ENCODE measurements at regions of chr2 and their contacts with region 1.

Region 1: GRCh38 chr2:176554101-176555048 is 285.1 kb downstream of the MTX2 start:
- DNase-seq: peak; percentile 8
- ATAC-seq: peak; percentile 79
- H3K4me3 ChIP-seq: peak overlapping the region; percentile 32; the same call in 1 of the 2 replicates
- H3K27ac ChIP-seq: no peak overlapping the region
- H3K4me1 ChIP-seq: no peaks in the 10 kb centered on the region
- H3K27me3 ChIP-seq: 0 out of 4 replicates have a peak, but pooled peaks cover 0 to 3% of the 10 kb centered on the region in 2 experiments
- CTCF ChIP-seq: peak; percentile 58 to 78 (median 70)
- EP300 ChIP-seq: no peak
- POLR2A ChIP-seq: no peak
- RAD21 ChIP-seq: peak; percentile 82

Region 2: GRCh38 chr2:175698061-175698460 is 856.3 kb before region 1 on chr2:
- CTCF ChIA-PET with region 1: no interaction called
- POLR2A ChIA-PET with region 1: no interaction called
- RAD21 ChIA-PET with region 1: no interaction called
- SMC1A ChIA-PET with region 1: no interaction called
- in situ Hi-C with region 1: no loop called
- intact Hi-C with region 1: no loop called
- DNase-seq: no peak
- ATAC-seq: no peak
- H3K4me3 ChIP-seq: no peak overlapping the region
- H3K27ac ChIP-seq: no peak overlapping the region
- H3K4me1 ChIP-seq: no peaks in the 10 kb centered on the region
- H3K27me3 ChIP-seq: no peaks in the 10 kb centered on the region
- CTCF ChIP-seq: no peak
- EP300 ChIP-seq: no peak
- POLR2A ChIP-seq: no peak
- RAD21 ChIP-seq: no peak

Region 3: DNA sequence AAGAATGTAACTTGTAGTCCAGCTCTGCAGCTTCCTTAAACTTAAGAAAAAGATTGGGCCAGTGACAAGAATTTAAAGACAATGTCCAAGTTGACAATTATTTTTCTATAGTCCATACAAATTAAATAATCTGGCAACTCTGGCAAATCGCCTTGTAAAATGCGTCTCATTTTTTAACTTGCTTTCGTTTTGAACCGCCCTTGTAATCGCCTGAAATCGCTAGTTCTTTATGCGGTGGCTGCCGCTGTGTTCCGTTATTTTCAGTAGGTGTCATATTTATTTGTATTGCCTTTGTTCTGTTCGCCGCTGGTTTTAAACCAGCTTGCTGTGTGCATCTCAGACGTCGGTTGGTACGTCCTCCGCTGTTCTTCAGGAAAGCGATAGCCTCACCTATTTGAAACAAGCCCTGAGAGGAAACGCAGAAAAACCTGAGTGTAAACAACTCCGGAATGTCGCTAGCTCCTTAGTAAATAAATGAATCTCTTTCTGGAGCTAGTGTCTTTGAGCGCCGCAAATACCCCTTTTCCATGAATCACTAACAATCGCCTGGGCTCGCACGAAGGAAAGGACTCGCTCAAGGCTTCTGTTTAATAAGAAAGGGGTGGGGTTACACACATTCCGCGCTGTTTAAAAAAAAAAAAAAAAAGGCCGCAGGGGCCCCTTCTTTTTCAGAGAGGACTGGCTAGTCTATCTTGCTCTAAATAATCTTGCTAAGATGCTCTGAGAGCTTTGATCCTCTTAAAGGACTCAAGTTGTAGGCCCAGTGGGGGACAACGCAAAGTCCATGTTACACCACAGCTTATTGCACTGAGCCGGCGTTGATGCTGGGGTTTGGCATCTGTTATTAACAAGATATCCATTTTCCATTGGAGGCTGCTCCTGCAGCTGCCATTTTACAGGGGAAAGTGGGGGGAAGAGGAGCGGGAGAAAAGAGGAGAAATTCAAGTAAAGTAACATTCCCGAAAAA is 421.9 kb before region 1 on chr2:
- CTCF ChIA-PET with region 1: interaction called, 36 read pairs
- POLR2A ChIA-PET with region 1: no interaction called
- RAD21 ChIA-PET with region 1: interaction called, 16 read pairs
- SMC1A ChIA-PET with region 1: interaction called, 58 read pairs
- in situ Hi-C with region 1: no loop called
- intact Hi-C with region 1: no loop called
- DNase-seq: no peak
- ATAC-seq: no peak
- H3K4me3 ChIP-seq: peak overlapping the region; percentile 6; the same call in 1 of the 2 replicates
- H3K27ac ChIP-seq: no peak overlapping the region
- H3K4me1 ChIP-seq: no peaks in the 10 kb centered on the region
- H3K27me3 ChIP-seq: peaks cover 10 to 32% of the 10 kb centered on the region in 2 experiments
- CTCF ChIP-seq: no peak
- EP300 ChIP-seq: no peak
- POLR2A ChIP-seq: no peak
- RAD21 ChIP-seq: no peak

Region 4: DNA sequence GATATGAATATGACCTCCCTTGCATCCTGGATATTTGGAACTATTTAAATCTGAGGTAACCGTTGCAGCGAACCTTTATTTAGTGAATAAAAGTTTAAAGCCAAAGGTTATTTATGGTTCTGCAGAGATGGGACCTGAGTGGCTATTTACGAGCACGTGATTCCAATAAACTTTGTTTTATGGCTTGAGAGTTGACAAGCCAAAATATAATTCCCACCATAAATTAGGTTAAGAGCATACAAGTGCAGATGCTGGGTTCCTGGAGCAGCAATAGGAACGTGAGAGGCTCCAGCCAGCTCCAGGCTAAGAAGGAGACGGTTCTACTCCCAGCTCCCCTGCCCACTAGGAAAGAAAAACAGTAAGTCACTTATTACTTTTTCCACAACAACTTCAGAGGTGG is 408.3 kb before region 1 on chr2:
- CTCF ChIA-PET with region 1: interaction called, 120 read pairs
- POLR2A ChIA-PET with region 1: no interaction called
- RAD21 ChIA-PET with region 1: interaction called, 103 read pairs
- SMC1A ChIA-PET with region 1: interaction called, 58 read pairs
- in situ Hi-C with region 1: loop called (anchors 5 kb)
- intact Hi-C with region 1: no loop called
- DNase-seq: no peak
- ATAC-seq: no peak
- H3K4me3 ChIP-seq: no peak overlapping the region
- H3K27ac ChIP-seq: no peak overlapping the region
- H3K4me1 ChIP-seq: no peaks in the 10 kb centered on the region
- H3K27me3 ChIP-seq: peaks cover 10 to 28% of the 10 kb centered on the region in 2 experiments
- CTCF ChIP-seq: no peak
- EP300 ChIP-seq: no peak
- POLR2A ChIP-seq: no peak
- RAD21 ChIP-seq: no peak

Region 5: GRCh38 chr2:176491172-176491904 is 63.0 kb before region 1 on chr2:
- CTCF ChIA-PET with region 1: interaction called, 21 read pairs
- POLR2A ChIA-PET with region 1: no interaction called
- RAD21 ChIA-PET with region 1: interaction called, 6 read pairs
- SMC1A ChIA-PET with region 1: interaction called, 10 read pairs
- in situ Hi-C with region 1: no loop called
- intact Hi-C with region 1: no loop called
- DNase-seq: peak; percentile 67
- ATAC-seq: peak; percentile 89
- H3K4me3 ChIP-seq: no peak overlapping the region
- H3K27ac ChIP-seq: no peak overlapping the region
- H3K4me1 ChIP-seq: peaks cover 26% of the 10 kb centered on the region
- H3K27me3 ChIP-seq: no peaks in the 10 kb centered on the region; a peak in 1 of 4 replicates
- CTCF ChIP-seq: no peak
- EP300 ChIP-seq: peak in 1 of 2 experiments; percentile 80; a peak in 2 of 4 replicates
- POLR2A ChIP-seq: no peak
- RAD21 ChIP-seq: no peak

Region 6: GRCh38 chr2:176565641-176566323 is 11.4 kb after region 1 on chr2:
- CTCF ChIA-PET with region 1: interaction called, 10 read pairs
- POLR2A ChIA-PET with region 1: no interaction called
- RAD21 ChIA-PET with region 1: interaction called, 5 read pairs
- SMC1A ChIA-PET with region 1: interaction called, 4 read pairs
- in situ Hi-C with region 1: no loop called
- intact Hi-C with region 1: no loop called
- DNase-seq: no peak
- ATAC-seq: no peak
- H3K4me3 ChIP-seq: no peak overlapping the region
- H3K27ac ChIP-seq: no peak overlapping the region
- H3K4me1 ChIP-seq: no peaks in the 10 kb centered on the region
- H3K27me3 ChIP-seq: no peaks in the 10 kb centered on the region; a peak in 1 of 4 replicates
- CTCF ChIP-seq: no peak
- EP300 ChIP-seq: no peak
- POLR2A ChIP-seq: no peak
- RAD21 ChIP-seq: no peak

Region 7: DNA sequence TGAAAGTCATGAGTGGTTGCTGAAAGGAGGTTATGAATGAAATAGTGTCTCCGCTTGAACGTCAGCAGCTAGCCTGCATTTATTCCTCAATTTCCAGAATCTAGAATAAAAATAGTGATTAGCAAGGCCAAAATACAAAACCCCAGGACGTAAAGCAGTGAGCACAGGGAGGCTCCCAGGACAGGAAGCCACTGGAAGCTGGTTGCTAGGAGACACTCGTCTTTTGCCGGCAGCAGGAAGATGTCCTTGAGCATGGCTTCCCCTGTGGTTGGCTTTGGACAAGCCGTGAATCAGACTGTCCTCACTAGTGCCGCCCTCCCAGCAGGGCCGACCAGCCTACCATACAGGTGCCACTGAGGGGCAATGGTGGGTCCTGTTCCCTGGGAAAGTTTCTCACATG is 89.3 kb after region 1 on chr2:
- CTCF ChIA-PET with region 1: interaction called, 19 read pairs
- POLR2A ChIA-PET with region 1: no interaction called
- RAD21 ChIA-PET with region 1: interaction called, 12 read pairs
- SMC1A ChIA-PET with region 1: interaction called, 11 read pairs
- in situ Hi-C with region 1: no loop called
- intact Hi-C with region 1: no loop called
- DNase-seq: no peak
- ATAC-seq: no peak
- H3K4me3 ChIP-seq: no peak overlapping the region
- H3K27ac ChIP-seq: no peak overlapping the region
- H3K4me1 ChIP-seq: no peaks in the 10 kb centered on the region
- H3K27me3 ChIP-seq: peaks cover 3 to 4% of the 10 kb centered on the region in 2 experiments; a peak in 3 of 4 replicates
- CTCF ChIP-seq: no peak
- EP300 ChIP-seq: no peak
- POLR2A ChIP-seq: no peak
- RAD21 ChIP-seq: no peak

Region 8: DNA sequence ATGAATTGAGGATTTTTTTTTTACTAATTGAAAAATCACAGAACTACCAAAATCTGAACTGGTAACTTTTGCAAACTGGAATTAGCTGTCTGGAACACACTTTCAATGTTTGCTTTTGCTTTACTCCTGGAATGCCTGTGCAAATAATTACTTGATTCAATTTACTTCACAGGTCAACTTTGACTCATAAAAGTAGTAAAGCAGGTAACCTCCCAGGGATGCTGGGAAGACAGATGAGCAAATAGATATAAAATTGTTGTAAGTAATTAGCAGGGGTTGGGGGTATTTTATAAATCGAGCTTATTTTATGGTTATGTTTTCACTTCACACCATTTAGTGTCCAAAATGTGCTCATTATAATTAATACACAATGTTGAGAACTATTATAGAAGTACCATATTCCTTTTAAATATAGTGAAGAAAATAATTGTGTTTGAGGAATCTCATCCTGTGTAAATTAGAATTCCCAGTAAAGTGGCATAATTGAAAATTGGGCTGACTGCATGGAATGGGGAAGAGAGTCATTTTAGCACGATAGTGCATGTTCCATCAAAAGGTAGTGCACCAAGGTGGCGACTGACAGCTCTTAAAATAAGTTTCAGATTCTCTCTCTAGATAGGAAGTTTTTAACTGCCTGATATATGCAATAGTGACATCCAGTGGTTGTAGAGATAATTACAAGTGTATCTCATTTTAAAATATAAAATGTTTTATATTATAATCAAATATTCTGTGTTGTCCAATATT is 260.1 kb after region 1 on chr2:
- CTCF ChIA-PET with region 1: interaction called, 10 read pairs
- POLR2A ChIA-PET with region 1: no interaction called
- RAD21 ChIA-PET with region 1: interaction called, 9 read pairs
- SMC1A ChIA-PET with region 1: interaction called, 9 read pairs
- in situ Hi-C with region 1: no loop called
- intact Hi-C with region 1: no loop called
- DNase-seq: peak; percentile 8
- ATAC-seq: peak; percentile 80
- H3K4me3 ChIP-seq: no peak overlapping the region
- H3K27ac ChIP-seq: no peak overlapping the region
- H3K4me1 ChIP-seq: no peaks in the 10 kb centered on the region
- H3K27me3 ChIP-seq: no peaks in the 10 kb centered on the region
- CTCF ChIP-seq: peak; percentile 42 to 54 (median 48); a peak in 5 of 6 replicates
- EP300 ChIP-seq: no peak
- POLR2A ChIP-seq: no peak
- RAD21 ChIP-seq: peak; percentile 79